ENCODE measurements at regions of chr2 and their contacts with region 1.

Region 1: DNA sequence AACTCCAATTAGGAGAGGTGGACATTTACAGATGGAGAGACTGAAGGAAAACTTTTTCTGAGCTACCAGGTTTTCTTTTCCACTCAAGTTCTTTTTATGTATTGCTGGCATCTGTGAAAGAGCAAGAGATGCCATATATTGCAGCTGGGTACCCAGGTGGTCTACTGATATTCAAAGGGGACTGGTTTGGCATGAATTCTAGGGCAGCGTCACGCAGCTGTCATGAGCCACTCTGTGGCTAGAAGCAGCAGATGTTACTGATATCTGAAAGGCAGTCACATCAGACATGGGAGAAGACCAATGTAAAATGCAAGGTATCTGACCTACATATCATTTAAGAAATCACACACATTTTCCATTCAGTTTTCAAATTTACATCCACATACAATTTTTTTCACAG is 408.8 kb downstream of the GALNT13 start:
- DNase-seq: no peak
- ATAC-seq: no peak
- H3K4me3 ChIP-seq: no peak overlapping the region
- H3K27ac ChIP-seq: no peak overlapping the region
- H3K4me1 ChIP-seq: no peaks in the 10 kb centered on the region
- H3K27me3 ChIP-seq: no peaks in the 10 kb centered on the region
- CTCF ChIP-seq: no peak

Region 2: DNA sequence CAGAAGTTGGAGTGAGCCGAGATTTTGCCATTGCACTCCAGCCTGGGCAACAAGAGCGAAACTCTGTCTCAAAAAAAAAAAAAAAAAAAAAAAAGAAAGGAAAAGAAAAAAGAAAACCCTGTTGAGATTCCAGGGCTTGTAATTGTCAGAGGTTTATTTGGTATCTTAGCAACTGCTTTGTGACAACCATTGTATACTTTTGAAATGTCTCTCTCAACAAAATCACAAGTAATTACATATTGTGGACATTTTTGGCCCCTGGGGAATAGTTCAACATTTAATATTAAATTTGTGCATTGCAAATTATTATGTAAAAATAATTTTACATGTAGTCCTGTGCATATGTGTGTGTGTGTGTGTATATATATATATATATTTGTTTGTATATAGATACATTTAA is 138.1 kb before region 1 on chr2:
- CTCF ChIA-PET with region 1: no interaction called
- POLR2A ChIA-PET with region 1: interaction called, 17 read pairs
- intact Hi-C with region 1: no loop called
- DNase-seq: no peak
- ATAC-seq: no peak
- H3K4me3 ChIP-seq: no peak overlapping the region
- H3K27ac ChIP-seq: no peak overlapping the region
- H3K4me1 ChIP-seq: no peaks in the 10 kb centered on the region
- H3K27me3 ChIP-seq: no peaks in the 10 kb centered on the region
- CTCF ChIP-seq: no peak

Region 3: DNA sequence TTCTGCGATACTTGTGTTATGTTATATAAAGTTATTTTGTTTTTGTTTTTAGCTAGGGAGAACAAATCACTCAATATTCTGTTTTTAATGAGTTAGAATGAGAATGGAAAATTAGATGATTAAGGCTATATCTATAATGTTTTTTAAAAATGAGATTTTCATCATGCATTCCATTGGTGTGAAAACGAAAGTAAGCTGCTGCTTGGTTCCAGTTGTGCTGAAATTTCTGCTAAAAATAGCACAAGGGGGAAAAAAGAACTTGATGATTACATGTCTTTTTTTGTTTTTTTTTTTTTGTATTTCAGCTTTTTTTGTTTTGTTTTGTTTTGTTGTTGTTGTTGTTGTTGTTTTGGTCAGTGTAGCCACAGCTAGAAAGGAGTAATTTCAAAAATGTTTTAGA is 175.3 kb after region 1 on chr2:
- CTCF ChIA-PET with region 1: no interaction called
- POLR2A ChIA-PET with region 1: no interaction called
- intact Hi-C with region 1: no loop called
- DNase-seq: no peak
- ATAC-seq: no peak
- H3K4me3 ChIP-seq: peak overlapping the region; percentile 61
- H3K27ac ChIP-seq: no peak overlapping the region
- H3K4me1 ChIP-seq: no peaks in the 10 kb centered on the region
- H3K27me3 ChIP-seq: no peaks in the 10 kb centered on the region
- CTCF ChIP-seq: no peak